Mucosa of descending colon (tissue), 3 donors: ENCODE measurements at regions of chr16 and their contacts with region 1.

Region 1: DNA sequence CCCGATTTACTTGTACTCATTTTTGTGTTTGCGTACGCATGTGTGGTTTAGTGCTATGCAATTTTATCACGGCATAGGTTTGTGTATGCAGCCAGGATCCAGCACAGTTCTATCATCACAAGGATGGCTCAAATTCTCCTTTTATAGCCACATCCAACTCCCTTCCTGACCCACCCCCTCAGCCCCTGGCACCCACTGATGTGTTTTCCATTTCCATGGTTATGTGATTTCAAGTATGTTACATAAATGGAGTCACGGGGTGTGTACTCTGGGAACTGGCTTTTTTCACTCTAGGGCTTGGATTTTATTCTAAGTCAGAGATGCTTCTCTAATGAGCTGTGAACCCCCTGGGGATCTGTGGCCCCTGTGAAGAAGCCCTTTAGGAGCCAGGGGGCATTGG is 16.8 kb downstream of the IL4R start:
- DNase-seq: peak in 1 of 3 donors; percentile 49
- ATAC-seq: peak; percentile 49
- H3K4me3 ChIP-seq: no peak overlapping the region
- H3K4me1 ChIP-seq: peaks cover 21% of the 10 kb centered on the region
- CTCF ChIP-seq: no peak

Region 2: DNA sequence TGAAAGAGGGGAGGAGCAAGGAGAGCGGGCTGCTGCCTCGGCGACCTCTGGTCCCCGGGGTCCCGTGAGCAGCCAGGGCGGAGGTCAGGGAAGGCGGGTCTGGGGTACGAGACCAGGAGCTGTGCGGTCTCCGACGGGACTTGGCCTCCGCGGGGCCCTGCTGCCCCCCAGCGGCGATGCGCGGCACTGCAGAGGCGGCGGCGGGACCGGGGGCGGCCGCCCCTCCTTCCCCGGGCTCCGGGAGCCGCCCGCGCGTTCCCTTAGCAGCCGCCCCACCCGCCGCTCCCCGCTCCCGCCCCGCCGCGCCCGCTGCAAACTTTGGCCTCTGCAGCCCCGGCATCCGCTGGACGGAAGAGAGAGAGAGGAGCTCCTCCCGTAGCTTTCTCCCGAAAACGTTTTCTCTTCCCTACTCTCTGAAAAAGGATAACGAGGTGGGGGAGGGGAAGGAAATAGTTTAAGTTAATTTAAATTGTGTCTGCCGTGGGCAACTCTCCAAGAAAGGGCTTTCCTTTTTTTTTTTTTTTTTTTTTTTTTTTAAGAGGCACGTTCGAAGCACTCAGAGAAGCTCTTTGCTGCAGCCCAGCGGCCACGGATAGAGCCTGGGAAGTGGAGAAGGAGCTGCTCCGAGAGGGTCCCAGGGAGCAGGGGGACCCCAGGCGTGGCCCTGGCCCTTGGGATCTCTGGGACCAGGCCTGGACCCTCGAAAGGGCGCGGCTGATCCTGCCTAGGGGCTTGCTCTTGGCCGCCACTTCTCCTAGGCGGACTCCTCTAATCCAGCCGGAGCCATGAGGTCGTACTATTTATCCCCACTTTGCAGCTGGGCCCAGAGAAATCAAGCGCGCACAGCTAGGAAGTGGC is 220.6 kb before region 1 on chr16:
- intact Hi-C with region 1: no loop called
- DNase-seq: peak; percentile 89 to 96 (median 91)
- ATAC-seq: peak; percentile 97
- H3K4me3 ChIP-seq: no peak overlapping the region
- H3K4me1 ChIP-seq: peaks cover 3% of the 10 kb centered on the region
- CTCF ChIP-seq: peak; percentile 99

Region 3: DNA sequence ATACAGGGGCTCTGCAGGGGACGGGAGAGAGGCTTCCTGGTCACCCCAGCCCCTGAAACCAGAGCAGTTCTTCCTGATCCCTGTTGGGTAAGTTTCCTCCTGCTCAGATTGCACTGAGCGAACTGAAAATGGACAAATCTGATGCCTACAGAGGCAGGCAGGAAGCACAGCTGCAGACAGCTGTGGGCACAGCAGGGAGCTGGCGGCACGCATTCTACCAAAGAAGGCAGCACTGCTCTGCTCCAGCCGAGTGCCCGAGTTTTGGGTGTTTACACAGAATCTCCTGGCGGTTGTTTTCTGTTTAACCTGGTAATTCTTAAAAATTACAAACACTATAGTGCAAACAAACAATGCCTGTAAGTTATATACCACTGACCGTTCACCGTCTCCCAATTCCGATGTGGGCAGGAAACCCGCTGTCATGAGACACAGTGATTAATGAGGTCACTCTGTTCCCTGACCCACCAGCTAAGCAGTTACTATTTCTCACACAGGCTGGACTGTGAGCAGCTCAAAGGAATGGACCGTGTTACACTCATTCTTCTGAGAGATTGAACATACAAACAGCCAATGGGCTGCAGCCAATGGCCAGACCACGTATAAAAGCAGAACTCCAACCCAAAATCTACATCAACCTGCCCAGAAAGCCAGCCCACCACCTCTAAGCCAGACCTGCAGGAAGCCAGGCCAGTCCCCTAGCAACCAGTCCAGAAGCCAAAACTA is 87.5 kb before region 1 on chr16:
- intact Hi-C with region 1: loop called in 1 of 2 experiments (anchors 10 kb)
- DNase-seq: no peak
- ATAC-seq: peak; percentile 34
- H3K4me3 ChIP-seq: no peak overlapping the region
- H3K4me1 ChIP-seq: peaks cover 58% of the 10 kb centered on the region
- CTCF ChIP-seq: no peak